Naive thymus-derived CD8-positive, alpha-beta T cell (primary cell): ENCODE measurements at regions of chr11 and their contacts with region 1.

Region 1: GRCh38 chr11:46315033-46315738 is 32.1 kb upstream of the DGKZ start:
- DNase-seq: peak; percentile 53 to 87 (median 69)
- ATAC-seq: peak; percentile 84 to 86
- H3K4me3 Mint-ChIP-seq: peak overlapping the region in 2 of 10 donors; percentile 47 to 49
- H3K27ac Mint-ChIP-seq: peak overlapping the region in 5 of 10 donors; percentile 6 to 90 (median 61)
- H3K4me1 Mint-ChIP-seq: peaks cover 15 to 31% (median 23%) of the 10 kb centered on the region in 4 donors
- H3K27me3 Mint-ChIP-seq: peaks cover 0 to under 1% (median 0%) of the 10 kb centered on the region in 5 donors

Region 2: DNA sequence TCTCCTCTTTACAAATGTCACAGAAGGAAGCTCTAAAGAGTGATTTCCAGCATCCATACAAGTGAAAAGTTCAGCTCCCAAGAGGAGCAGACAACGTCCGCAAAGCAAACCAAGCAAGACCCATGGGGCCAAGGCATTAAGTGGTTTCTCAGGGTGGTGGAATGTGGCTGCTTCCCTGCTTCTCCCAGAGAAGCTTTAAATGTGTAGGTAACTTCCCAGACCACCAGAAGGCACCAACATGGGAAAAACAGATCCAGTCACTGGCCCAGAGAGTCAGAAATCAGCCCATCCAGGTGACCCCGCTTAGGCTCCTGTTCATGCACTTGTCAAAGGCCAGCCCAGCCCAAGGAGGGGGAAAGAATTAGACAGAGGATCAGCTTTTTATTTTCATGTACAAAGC is 180.6 kb before region 1 on chr11:
- POLR2A ChIA-PET with region 1: no interaction called
- DNase-seq: no peak
- ATAC-seq: no peak
- H3K4me3 Mint-ChIP-seq: no peak overlapping the region
- H3K27ac Mint-ChIP-seq: no peak overlapping the region
- H3K4me1 Mint-ChIP-seq: no peaks in the 10 kb centered on the region
- H3K27me3 Mint-ChIP-seq: peaks cover 0 to 2% (median 0%) of the 10 kb centered on the region in 5 donors

Region 3: GRCh38 chr11:46332568-46333393 is 17.6 kb after region 1 on chr11:
- POLR2A ChIA-PET with region 1: interaction called, 85 read pairs
- DNase-seq: peak in 9 of 10 donors; percentile 38 to 74 (median 52)
- ATAC-seq: peak; percentile 33 to 54
- H3K4me3 Mint-ChIP-seq: peak overlapping the region; percentile 78 to 96 (median 92)
- H3K27ac Mint-ChIP-seq: peak overlapping the region; percentile 83 to 99 (median 96)
- H3K4me1 Mint-ChIP-seq: peaks cover 27 to 73% (median 68%) of the 10 kb centered on the region in 4 donors
- H3K27me3 Mint-ChIP-seq: peaks cover 0 to 18% (median 0%) of the 10 kb centered on the region in 5 donors